ENCODE measurements at regions of chr7 and their contacts with region 1.

Region 1: DNA sequence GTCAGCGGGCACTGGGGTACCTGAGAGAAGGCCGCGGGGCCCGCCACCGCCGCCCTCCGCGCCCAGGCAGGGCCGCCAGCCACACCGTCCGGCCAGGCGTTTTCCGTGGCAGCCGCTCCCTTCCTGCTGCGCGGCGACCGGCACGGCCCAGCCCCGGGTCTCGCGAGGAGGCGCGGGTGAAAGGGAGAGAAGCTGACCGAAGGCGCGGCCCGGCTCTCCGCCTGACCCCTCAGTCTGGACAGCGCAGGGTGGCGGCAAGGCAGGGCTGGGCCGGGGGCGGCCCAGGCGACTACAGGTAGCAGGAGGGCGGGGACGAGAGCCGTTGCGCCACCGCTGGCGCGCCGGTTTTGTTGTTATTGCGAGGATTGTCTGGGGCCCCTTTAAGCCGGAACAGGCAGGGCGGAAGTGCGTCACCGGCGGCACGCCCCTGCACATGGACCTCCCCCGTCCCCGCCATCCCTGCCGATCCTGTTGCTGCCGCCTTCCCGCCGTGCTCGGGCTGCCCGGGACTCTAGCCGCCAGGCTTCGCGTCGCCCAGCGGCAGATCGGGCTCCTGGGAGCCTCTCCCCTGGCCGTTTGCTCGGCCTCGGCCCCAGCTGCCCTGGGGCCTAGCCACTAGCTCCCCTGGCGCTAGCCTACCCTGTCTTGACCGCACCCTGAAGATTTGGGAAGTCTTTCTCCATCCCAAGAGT is at the start of gene HERPUD2:
- DNase-seq: peak; percentile 96
- ATAC-seq: peak; percentile 77
- H3K4me3 Mint-ChIP-seq: peak within 1 kb of the TSS; percentile 97
- H3K27ac Mint-ChIP-seq: peak within 1 kb of the TSS; percentile 98
- H3K4me1 Mint-ChIP-seq: peaks cover 42% of the 10 kb centered on the region
- H3K27me3 Mint-ChIP-seq: no peaks in the 10 kb centered on the region
- total RNA-seq, gene HERPUD2: 22.1 to 26.7 TPM

Region 2: DNA sequence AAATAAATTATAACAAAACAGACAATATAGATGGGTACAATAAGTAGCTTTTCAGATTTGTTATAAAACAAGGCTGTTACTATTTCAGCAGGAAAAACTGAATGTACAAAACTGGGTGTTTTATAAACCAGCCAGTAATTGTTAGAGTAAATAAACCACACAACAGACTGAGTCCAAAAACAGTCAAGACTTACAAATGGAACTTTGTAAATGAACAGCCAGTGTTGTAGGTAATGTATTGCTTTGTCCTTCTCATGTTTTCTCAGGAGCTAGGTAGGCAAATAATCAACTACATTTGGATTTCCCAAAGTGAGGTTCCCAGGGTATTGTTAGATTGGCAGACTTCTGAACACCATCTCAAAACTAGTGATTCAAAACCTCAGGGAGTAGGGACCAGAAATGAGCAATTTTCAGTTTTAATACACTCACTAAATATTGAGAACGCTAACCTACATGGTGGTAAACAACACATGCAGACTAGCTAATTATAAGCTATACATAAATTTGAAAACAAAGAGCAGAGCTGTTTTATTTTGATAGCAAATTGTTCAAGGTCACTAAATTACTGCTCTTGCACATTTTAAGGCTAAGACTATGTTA is 36.2 kb before region 1 on chr7:
- CTCF ChIA-PET with region 1: interaction called, 3 read pairs
- POLR2A ChIA-PET with region 1: interaction called, 4 read pairs
- intact Hi-C with region 1: loop called in 1 of 2 experiments (anchors 5 kb)
- DNase-seq: no peak
- ATAC-seq: peak; percentile 47
- H3K4me3 Mint-ChIP-seq: no peak overlapping the region
- H3K27ac Mint-ChIP-seq: no peak overlapping the region
- H3K4me1 Mint-ChIP-seq: peaks cover 41% of the 10 kb centered on the region
- H3K27me3 Mint-ChIP-seq: no peaks in the 10 kb centered on the region

Region 3: DNA sequence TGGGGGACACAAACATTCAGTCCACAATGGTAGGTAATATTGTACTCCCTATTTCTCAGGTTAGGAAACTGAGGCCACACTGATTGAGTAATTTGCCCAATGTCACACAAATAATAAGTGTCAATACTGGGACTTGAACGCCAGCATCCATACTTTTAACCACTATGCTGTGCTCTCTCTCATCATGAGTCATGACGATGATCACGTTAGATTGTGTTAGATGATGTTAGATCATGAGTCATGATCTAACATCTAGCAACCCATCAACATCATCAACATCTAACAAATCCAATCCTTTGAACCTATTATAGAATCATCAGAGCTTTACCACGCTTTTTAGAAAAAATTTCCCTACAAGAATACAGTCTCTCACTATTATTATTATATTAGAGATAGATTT is 28.1 kb after region 1 on chr7:
- CTCF ChIA-PET with region 1: interaction called, 15 read pairs
- POLR2A ChIA-PET with region 1: interaction called, 4 read pairs
- intact Hi-C with region 1: loop called (anchors 1 to 2 kb)
- DNase-seq: peak; percentile 33
- ATAC-seq: peak; percentile 80
- H3K4me3 Mint-ChIP-seq: peak overlapping the region; percentile 32
- H3K27ac Mint-ChIP-seq: peak overlapping the region; percentile 90
- H3K4me1 Mint-ChIP-seq: peaks cover 55% of the 10 kb centered on the region
- H3K27me3 Mint-ChIP-seq: no peaks in the 10 kb centered on the region

Region 4: GRCh38 chr7:36152756-36153570 is 458.0 kb after region 1 on chr7 and contains the start of gene EEPD1:
- CTCF ChIA-PET with region 1: no interaction called
- POLR2A ChIA-PET with region 1: no interaction called
- intact Hi-C with region 1: loop called in 1 of 2 experiments (anchors 1 kb)
- DNase-seq: peak; percentile 100
- ATAC-seq: peak; percentile 98
- H3K4me3 Mint-ChIP-seq: peak within 1 kb of the TSS; percentile 71
- H3K27ac Mint-ChIP-seq: peak within 1 kb of the TSS; percentile 43
- H3K4me1 Mint-ChIP-seq: peaks cover 29% of the 10 kb centered on the region
- H3K27me3 Mint-ChIP-seq: no peaks in the 10 kb centered on the region
- total RNA-seq, gene EEPD1: 1.3 TPM

Region 5: GRCh38 chr7:36366718-36367560 is 672.0 kb after region 1 on chr7:
- CTCF ChIA-PET with region 1: no interaction called
- POLR2A ChIA-PET with region 1: no interaction called
- intact Hi-C with region 1: loop called in 1 of 2 experiments (anchors 10 kb)
- DNase-seq: peak; percentile 95
- ATAC-seq: peak; percentile 98
- H3K4me3 Mint-ChIP-seq: peak overlapping the region; percentile 83
- H3K27ac Mint-ChIP-seq: peak overlapping the region; percentile 19
- H3K4me1 Mint-ChIP-seq: no peaks in the 10 kb centered on the region
- H3K27me3 Mint-ChIP-seq: peaks cover 10% of the 10 kb centered on the region

Measured in activated CD4-positive, alpha-beta T cell treated with anti-CD3 and anti-CD28 coated beads for 36 hours (primary cell).